Activated B cell treated with CpG ODN at 0.5 μM for 24 hours (primary cell): ENCODE measurements at regions of chr12 and their contacts with region 1.

Region 1: DNA sequence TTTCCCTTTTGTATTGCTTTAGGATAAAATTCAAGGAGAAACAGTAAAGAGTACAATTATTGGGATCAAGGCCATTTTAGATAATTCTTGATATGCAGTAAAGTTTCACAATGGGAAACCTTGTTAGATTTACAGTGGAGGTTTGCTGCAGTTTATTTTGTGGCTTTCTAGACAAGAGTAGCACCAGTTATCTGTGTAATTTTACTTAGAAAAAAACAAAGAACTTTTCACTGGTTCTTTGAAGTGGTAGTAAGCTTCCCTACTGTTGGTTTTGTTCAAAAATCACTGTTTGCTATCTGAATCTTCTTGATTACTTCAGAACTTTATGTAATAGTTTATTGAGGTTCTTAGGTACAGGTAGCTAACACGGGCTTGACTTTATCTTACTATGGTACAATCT is 42.0 kb downstream of the ADIPOR2 start:
- DNase-seq: no peak
- ATAC-seq: no peak
- H3K4me3 Mint-ChIP-seq: no peak overlapping the region
- H3K27ac Mint-ChIP-seq: no peak overlapping the region
- H3K4me1 Mint-ChIP-seq: peaks cover 18% of the 10 kb centered on the region
- H3K27me3 Mint-ChIP-seq: no peaks in the 10 kb centered on the region
- CTCF ChIP-seq: no peak

Region 2: GRCh38 chr12:1619587-1619986 is 113.3 kb before region 1 on chr12:
- CTCF ChIA-PET with region 1: no interaction called
- POLR2A ChIA-PET with region 1: no interaction called
- intact Hi-C with region 1: no loop called
- DNase-seq: no peak
- ATAC-seq: peak; percentile 31
- H3K4me3 Mint-ChIP-seq: no peak overlapping the region
- H3K27ac Mint-ChIP-seq: no peak overlapping the region
- H3K4me1 Mint-ChIP-seq: peaks cover 34% of the 10 kb centered on the region
- H3K27me3 Mint-ChIP-seq: peaks cover 5% of the 10 kb centered on the region
- CTCF ChIP-seq: no peak

Region 3: DNA sequence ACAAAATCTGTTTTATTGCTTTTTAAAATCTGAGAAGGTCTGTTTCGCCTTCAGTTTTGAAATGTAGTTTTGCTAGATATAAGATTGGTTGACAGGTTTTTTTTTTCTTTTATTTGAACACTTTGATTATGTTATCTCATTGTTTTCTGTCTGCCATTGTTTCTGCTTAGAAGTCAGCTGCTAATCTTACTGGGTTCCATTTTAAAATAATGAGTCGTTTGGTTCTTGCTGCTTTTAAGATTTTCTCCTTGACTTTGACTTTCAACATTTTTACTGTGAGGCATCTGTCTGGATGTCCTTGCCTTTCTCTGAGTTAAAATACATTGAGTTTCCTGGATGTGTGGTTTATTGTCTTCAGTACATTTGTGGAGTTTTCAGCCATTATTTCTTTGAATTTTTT is 14.7 kb after region 1 on chr12:
- CTCF ChIA-PET with region 1: no interaction called
- POLR2A ChIA-PET with region 1: no interaction called
- intact Hi-C with region 1: loop called (anchors 2 kb)
- DNase-seq: no peak
- ATAC-seq: no peak
- H3K4me3 Mint-ChIP-seq: no peak overlapping the region
- H3K27ac Mint-ChIP-seq: no peak overlapping the region
- H3K4me1 Mint-ChIP-seq: peaks cover 37% of the 10 kb centered on the region
- H3K27me3 Mint-ChIP-seq: no peaks in the 10 kb centered on the region
- CTCF ChIP-seq: no peak